ENCODE measurements at regions of chr3 and their contacts with region 1.

Region 1: DNA sequence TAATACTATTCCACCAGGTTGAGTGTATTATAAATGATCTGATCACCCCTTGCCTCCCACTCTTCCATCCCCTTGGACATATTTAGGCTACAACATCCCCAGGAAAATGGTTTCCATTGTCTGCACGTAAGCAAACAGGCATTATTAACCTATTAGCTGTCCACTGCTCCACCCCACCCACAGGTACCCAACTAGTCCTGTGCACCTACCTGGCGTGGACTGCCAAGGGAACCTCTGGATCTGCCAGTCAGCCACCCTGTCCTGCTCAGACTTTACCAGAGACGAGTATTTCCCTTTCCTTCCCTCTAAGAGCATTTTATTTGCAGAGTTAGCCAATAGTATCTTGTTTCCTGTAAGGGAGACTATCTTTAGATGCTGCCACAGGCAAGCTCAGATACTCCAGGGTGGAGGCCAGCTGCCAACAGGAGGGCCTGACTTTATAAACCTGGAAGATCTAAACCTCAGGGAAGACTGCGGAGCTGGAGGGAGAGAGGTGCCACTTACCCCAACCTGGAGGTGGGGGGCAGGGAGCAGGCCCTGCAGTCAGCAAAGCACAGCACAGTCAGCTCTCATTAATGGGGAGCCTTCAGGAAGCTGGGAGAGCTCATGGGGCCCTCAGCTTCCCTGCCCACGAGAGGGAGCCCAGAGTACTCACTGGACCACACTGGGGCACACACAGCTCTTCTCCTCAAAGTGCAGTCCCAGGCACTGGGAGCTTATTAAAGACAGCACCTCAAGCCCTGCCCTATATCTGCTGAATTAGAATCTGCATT is at the start of gene CX3CR1:
- DNase-seq: no peak
- H3K4me3 ChIP-seq: peak within 1 kb of the TSS in 49 of 59 donors; percentile 0 to 57 (median 28)
- H3K27ac ChIP-seq: peak within 1 kb of the TSS in 16 of 59 donors; percentile 8 to 60 (median 40)
- H3K27me3 ChIP-seq: peaks cover 0 to 5% (median 0%) of the 10 kb centered on the region in 45 donors
- CTCF ChIP-seq: no peak
- total RNA-seq, gene CX3CR1: 1.4 to 62.4 (median 16.5) TPM

Region 2: GRCh38 chr3:39208463-39209055 is 71.4 kb before region 1 on chr3:
- intact Hi-C with region 1: loop called (anchors 5 kb)
- DNase-seq: peak in 3 of 10 donors; percentile 43 to 64 (median 63)
- H3K4me3 ChIP-seq: no peak overlapping the region
- H3K27ac ChIP-seq: peak overlapping the region in 4 of 59 donors; percentile 5 to 41 (median 30)
- H3K27me3 ChIP-seq: no peaks in the 10 kb centered on the region
- CTCF ChIP-seq: peak in 55 of 56 donors; percentile 20 to 76 (median 59)

Region 3: GRCh38 chr3:39332525-39332924 is 52.6 kb after region 1 on chr3:
- intact Hi-C with region 1: no loop called
- DNase-seq: no peak
- H3K4me3 ChIP-seq: no peak overlapping the region
- H3K27ac ChIP-seq: no peak overlapping the region
- H3K27me3 ChIP-seq: no peaks in the 10 kb centered on the region
- CTCF ChIP-seq: no peak

Region 4: DNA sequence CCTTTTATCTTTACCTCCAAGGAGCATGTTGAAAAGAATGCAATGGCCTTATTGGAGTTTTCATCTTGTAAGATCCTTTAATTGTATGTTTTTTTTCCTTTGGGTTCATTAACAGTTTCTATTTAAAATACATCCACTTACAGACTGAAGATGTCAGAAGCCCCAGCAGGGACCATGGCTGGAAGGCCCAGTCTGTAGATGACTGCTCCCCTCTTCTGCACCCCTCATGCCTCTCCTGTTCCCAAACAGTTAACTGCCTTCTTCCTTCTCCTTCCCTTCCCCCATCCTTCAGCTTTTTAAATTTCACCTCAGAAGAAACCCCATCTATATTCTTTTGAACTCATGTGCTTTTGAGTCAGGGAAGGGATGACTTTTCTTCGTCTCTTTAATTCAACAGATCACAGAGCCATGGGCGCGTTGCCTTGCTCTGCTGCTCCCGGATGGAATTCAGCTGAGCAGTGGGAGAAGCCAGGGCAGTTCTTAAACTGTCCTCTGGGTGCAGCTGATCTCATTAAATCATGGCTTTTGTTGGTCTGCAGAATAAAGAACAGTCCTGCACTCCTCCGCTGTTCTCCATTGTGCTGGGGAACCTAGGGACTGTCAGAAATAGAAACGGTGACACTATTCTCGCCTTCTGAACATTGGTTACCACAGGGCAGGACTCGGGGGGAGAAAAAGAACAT is 958.1 kb after region 1 on chr3:
- intact Hi-C with region 1: no loop called
- DNase-seq: peak in 6 of 10 donors; percentile 12 to 64 (median 39)
- H3K4me3 ChIP-seq: peak overlapping the region in 12 of 59 donors; percentile 6 to 33 (median 20)
- H3K27ac ChIP-seq: peak overlapping the region in 30 of 59 donors; percentile 1 to 73 (median 35)
- H3K27me3 ChIP-seq: no peaks in the 10 kb centered on the region
- CTCF ChIP-seq: peak in 37 of 56 donors; percentile 9 to 58 (median 38)